MCF 10A (cell line): ENCODE measurements at regions of chr15 and their contacts with region 1.

Region 1: GRCh38 chr15:50051803-50052419 is 67.1 kb downstream of the ATP8B4 start:
- DNase-seq: peak; percentile 79
- H3K4me3 Mint-ChIP-seq: no peak overlapping the region
- H3K27ac Mint-ChIP-seq: peak overlapping the region; percentile 51
- H3K4me1 Mint-ChIP-seq: peaks cover 11% of the 10 kb centered on the region
- H3K27me3 Mint-ChIP-seq: no peaks in the 10 kb centered on the region
- CTCF ChIP-seq: peak; percentile 79

Region 2: DNA sequence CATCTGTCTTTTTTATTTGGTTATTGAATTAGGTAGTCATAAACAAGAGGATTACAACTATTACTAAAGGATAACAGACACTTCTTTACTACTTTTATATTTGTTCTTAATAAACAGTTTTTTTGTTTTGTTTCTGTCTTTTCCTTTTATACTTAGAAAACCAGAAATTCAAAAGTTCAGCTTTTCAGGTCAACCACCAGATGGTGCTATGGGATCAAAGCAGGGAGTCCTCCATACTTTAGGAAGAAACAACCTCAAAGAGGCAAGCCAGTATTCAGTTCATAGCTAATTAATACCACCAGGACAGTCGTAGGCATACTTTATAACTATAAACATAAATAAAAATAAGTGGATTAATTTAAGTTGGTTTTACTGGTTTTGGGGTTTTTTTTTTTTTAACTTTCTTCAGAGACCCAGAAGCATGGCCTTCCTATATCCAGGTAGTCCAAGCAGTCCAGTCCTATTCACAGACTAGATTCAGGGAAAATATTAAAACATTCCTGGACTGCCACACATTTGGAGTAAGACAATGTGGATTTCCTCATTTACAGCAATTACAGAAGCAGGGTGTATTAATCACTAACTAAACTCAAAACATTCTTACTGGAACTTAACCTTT is 1190.0 kb before region 1 on chr15:
- CTCF ChIA-PET with region 1: interaction called, 3 read pairs
- POLR2A ChIA-PET with region 1: no interaction called
- intact Hi-C with region 1: loop called (anchors 1 kb)
- DNase-seq: peak; percentile 72
- H3K4me3 Mint-ChIP-seq: no peak overlapping the region
- H3K27ac Mint-ChIP-seq: peak overlapping the region; percentile 61
- H3K4me1 Mint-ChIP-seq: peaks cover 29% of the 10 kb centered on the region
- H3K27me3 Mint-ChIP-seq: no peaks in the 10 kb centered on the region
- CTCF ChIP-seq: peak; percentile 73

Region 3: GRCh38 chr15:49235446-49236124 is 816.3 kb before region 1 on chr15:
- CTCF ChIA-PET with region 1: interaction called, 9 read pairs
- POLR2A ChIA-PET with region 1: interaction called, 3 read pairs
- intact Hi-C with region 1: loop called (anchors 2 kb)
- DNase-seq: peak; percentile 69
- H3K4me3 Mint-ChIP-seq: no peak overlapping the region
- H3K27ac Mint-ChIP-seq: peak overlapping the region; percentile 35
- H3K4me1 Mint-ChIP-seq: peaks cover 9% of the 10 kb centered on the region
- H3K27me3 Mint-ChIP-seq: no peaks in the 10 kb centered on the region
- CTCF ChIP-seq: peak; percentile 74

Region 4: GRCh38 chr15:49370782-49371181 is 681.1 kb before region 1 on chr15:
- CTCF ChIA-PET with region 1: interaction called, 5 read pairs
- POLR2A ChIA-PET with region 1: interaction called, 3 read pairs
- intact Hi-C with region 1: loop called (anchors 2 kb)
- DNase-seq: peak; percentile 30
- H3K4me3 Mint-ChIP-seq: no peak overlapping the region
- H3K27ac Mint-ChIP-seq: no peak overlapping the region
- H3K4me1 Mint-ChIP-seq: no peaks in the 10 kb centered on the region
- H3K27me3 Mint-ChIP-seq: no peaks in the 10 kb centered on the region
- CTCF ChIP-seq: peak; percentile 29

Region 5: GRCh38 chr15:49876401-49877038 is 175.4 kb before region 1 on chr15:
- CTCF ChIA-PET with region 1: interaction called, 13 read pairs
- POLR2A ChIA-PET with region 1: no interaction called
- intact Hi-C with region 1: no loop called
- DNase-seq: no peak
- H3K4me3 Mint-ChIP-seq: no peak overlapping the region
- H3K27ac Mint-ChIP-seq: no peak overlapping the region
- H3K4me1 Mint-ChIP-seq: no peaks in the 10 kb centered on the region
- H3K27me3 Mint-ChIP-seq: no peaks in the 10 kb centered on the region
- CTCF ChIP-seq: peak; percentile 17

Region 6: GRCh38 chr15:49901996-49902684 is 149.8 kb before region 1 on chr15:
- CTCF ChIA-PET with region 1: interaction called, 11 read pairs
- POLR2A ChIA-PET with region 1: no interaction called
- intact Hi-C with region 1: loop called (anchors 5 kb)
- DNase-seq: peak; percentile 43
- H3K4me3 Mint-ChIP-seq: no peak overlapping the region
- H3K27ac Mint-ChIP-seq: peak overlapping the region; percentile 14
- H3K4me1 Mint-ChIP-seq: peaks cover 10% of the 10 kb centered on the region
- H3K27me3 Mint-ChIP-seq: no peaks in the 10 kb centered on the region
- CTCF ChIP-seq: peak; percentile 52

Region 7: DNA sequence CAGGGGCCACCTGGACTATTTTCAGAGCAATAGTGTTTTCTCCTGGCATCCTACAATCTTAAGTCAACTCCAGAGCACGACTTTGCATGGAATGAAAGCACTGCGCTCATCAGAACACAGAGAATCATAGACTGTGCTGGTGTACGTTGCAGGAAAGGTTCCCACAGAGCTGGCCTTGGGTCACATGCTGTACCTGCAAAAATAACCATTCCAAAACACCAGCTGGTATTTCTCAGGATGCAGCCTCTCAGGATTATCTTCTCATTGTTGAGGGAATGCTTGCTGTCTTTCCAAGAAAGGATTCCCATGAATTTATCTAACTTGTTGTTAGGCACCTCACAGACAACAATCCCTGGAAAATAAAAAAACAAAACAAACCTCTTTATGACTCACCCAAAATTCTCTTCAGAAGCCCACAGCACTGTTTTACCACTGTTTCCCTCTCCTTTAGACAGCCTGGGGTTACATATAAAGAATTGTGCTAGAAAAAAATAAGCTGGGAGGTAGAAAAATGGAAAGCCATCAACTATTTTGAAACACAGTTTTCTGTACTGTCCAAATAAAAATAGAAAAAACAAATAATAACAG is 64.6 kb before region 1 on chr15:
- CTCF ChIA-PET with region 1: no interaction called
- POLR2A ChIA-PET with region 1: no interaction called
- intact Hi-C with region 1: no loop called
- DNase-seq: no peak
- H3K4me3 Mint-ChIP-seq: no peak overlapping the region
- H3K27ac Mint-ChIP-seq: no peak overlapping the region
- H3K4me1 Mint-ChIP-seq: no peaks in the 10 kb centered on the region
- H3K27me3 Mint-ChIP-seq: no peaks in the 10 kb centered on the region
- CTCF ChIP-seq: no peak